PC-3 (cell line): ENCODE measurements at regions of chr4 and their contacts with region 1.

Region 1: GRCh38 chr4:145061318-145061920 is 36.6 kb downstream of the ANAPC10 start:
- DNase-seq: peak; percentile 77
- ATAC-seq: peak; percentile 64
- H3K4me3 ChIP-seq: no peak overlapping the region
- H3K27ac ChIP-seq: no peak overlapping the region
- H3K4me1 ChIP-seq: no peaks in the 10 kb centered on the region
- H3K27me3 ChIP-seq: no peaks in the 10 kb centered on the region
- CTCF ChIP-seq: peak; percentile 85

Region 2: GRCh38 chr4:144174401-144175067 is 886.9 kb before region 1 on chr4:
- CTCF ChIA-PET with region 1: no interaction called
- POLR2A ChIA-PET with region 1: no interaction called
- intact Hi-C with region 1: loop called (anchors 1 kb)
- DNase-seq: peak; percentile 81
- ATAC-seq: peak; percentile 80
- H3K4me3 ChIP-seq: no peak overlapping the region
- H3K27ac ChIP-seq: no peak overlapping the region
- H3K4me1 ChIP-seq: no peaks in the 10 kb centered on the region
- H3K27me3 ChIP-seq: peaks cover 25% of the 10 kb centered on the region
- CTCF ChIP-seq: peak; percentile 74

Region 3: GRCh38 chr4:144355809-144356757 is 705.3 kb before region 1 on chr4:
- CTCF ChIA-PET with region 1: no interaction called
- POLR2A ChIA-PET with region 1: no interaction called
- intact Hi-C with region 1: loop called (anchors 5 kb)
- DNase-seq: peak; percentile 85
- ATAC-seq: peak; percentile 95
- H3K4me3 ChIP-seq: no peak overlapping the region
- H3K27ac ChIP-seq: no peak overlapping the region
- H3K4me1 ChIP-seq: peaks cover 12% of the 10 kb centered on the region; the same call in 1 of the 2 replicates
- H3K27me3 ChIP-seq: peaks cover 5% of the 10 kb centered on the region; the same call in 1 of the 2 replicates
- CTCF ChIP-seq: peak; percentile 48

Region 4: DNA sequence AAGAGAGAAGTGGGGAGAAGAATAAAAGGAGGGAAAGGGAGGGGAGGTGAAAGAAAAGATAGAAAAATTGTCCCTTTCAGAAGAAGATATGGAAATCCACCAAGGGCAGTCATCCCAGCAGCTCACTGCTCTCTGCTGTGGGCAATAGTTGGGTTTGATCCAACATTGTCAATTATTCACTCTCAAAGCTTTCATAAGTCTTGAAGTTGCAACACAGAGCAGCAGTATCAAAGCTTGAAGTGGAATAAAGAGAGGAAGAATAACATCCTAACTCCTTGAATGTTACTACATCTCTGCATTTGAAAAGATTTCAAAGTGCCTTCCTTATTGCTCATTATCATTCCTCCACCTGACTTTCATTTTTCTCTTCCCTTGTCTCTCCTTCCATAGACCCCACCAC is 477.8 kb before region 1 on chr4:
- CTCF ChIA-PET with region 1: no interaction called
- POLR2A ChIA-PET with region 1: no interaction called
- intact Hi-C with region 1: loop called (anchors 2 kb)
- DNase-seq: peak; percentile 68
- ATAC-seq: no peak
- H3K4me3 ChIP-seq: no peak overlapping the region
- H3K27ac ChIP-seq: peak overlapping the region; percentile 93
- H3K4me1 ChIP-seq: peaks cover 59% of the 10 kb centered on the region
- H3K27me3 ChIP-seq: no peaks in the 10 kb centered on the region
- CTCF ChIP-seq: no peak

Region 5: GRCh38 chr4:144627663-144628076 is 433.7 kb before region 1 on chr4:
- CTCF ChIA-PET with region 1: no interaction called
- POLR2A ChIA-PET with region 1: no interaction called
- intact Hi-C with region 1: loop called (anchors 2 kb)
- DNase-seq: peak; percentile 80
- ATAC-seq: peak; percentile 92
- H3K4me3 ChIP-seq: no peak overlapping the region
- H3K27ac ChIP-seq: 0 out of 2 replicates have a peak overlapping the region, but pooled peaks have one; percentile 10
- H3K4me1 ChIP-seq: peaks cover 12% of the 10 kb centered on the region
- H3K27me3 ChIP-seq: no peaks in the 10 kb centered on the region
- CTCF ChIP-seq: no peak

Region 6: GRCh38 chr4:144754562-144755410 is 306.6 kb before region 1 on chr4:
- CTCF ChIA-PET with region 1: no interaction called
- POLR2A ChIA-PET with region 1: no interaction called
- intact Hi-C with region 1: loop called (anchors 10 kb)
- DNase-seq: peak; percentile 50
- ATAC-seq: peak; percentile 72
- H3K4me3 ChIP-seq: no peak overlapping the region
- H3K27ac ChIP-seq: no peak overlapping the region
- H3K4me1 ChIP-seq: 0 out of 2 replicates have a peak, but pooled peaks cover 7% of the 10 kb centered on the region
- H3K27me3 ChIP-seq: no peaks in the 10 kb centered on the region
- CTCF ChIP-seq: peak; percentile 83

Region 7: GRCh38 chr4:144787365-144788258 is 273.8 kb before region 1 on chr4:
- CTCF ChIA-PET with region 1: no interaction called
- POLR2A ChIA-PET with region 1: no interaction called
- intact Hi-C with region 1: loop called (anchors 2 kb)
- DNase-seq: peak; percentile 62
- ATAC-seq: peak; percentile 49; the same call in 1 of the 2 replicates
- H3K4me3 ChIP-seq: no peak overlapping the region
- H3K27ac ChIP-seq: no peak overlapping the region
- H3K4me1 ChIP-seq: peaks cover 2% of the 10 kb centered on the region; the same call in 1 of the 2 replicates
- H3K27me3 ChIP-seq: no peaks in the 10 kb centered on the region
- CTCF ChIP-seq: peak; percentile 87